Endothelial cell of umbilical vein (primary cell): ENCODE measurements at regions of chr10 and their contacts with region 1.

Region 1: GRCh38 chr10:69957886-69958555 is 94.6 kb upstream of the MACROH2A2 start:
- DNase-seq: peak; percentile 43
- H3K4me3 ChIP-seq: no peak overlapping the region
- H3K27ac ChIP-seq: no peak overlapping the region
- H3K4me1 ChIP-seq: no peaks in the 10 kb centered on the region
- H3K27me3 ChIP-seq: no peaks in the 10 kb centered on the region
- CTCF ChIP-seq: peak; percentile 85 to 90
- POLR2A ChIP-seq: no peak

Region 2: GRCh38 chr10:69644658-69645295 is 313.2 kb before region 1 on chr10:
- CTCF ChIA-PET with region 1: interaction called, 15 read pairs
- POLR2A ChIA-PET with region 1: no interaction called
- dilution Hi-C with region 1: no loop called
- intact Hi-C with region 1: loop called (anchors 1 kb)
- DNase-seq: peak; percentile 49
- H3K4me3 ChIP-seq: no peak overlapping the region
- H3K27ac ChIP-seq: no peak overlapping the region
- H3K4me1 ChIP-seq: no peaks in the 10 kb centered on the region
- H3K27me3 ChIP-seq: peaks cover 2 to 3% of the 10 kb centered on the region in 2 experiments
- CTCF ChIP-seq: peak; percentile 84 to 86
- POLR2A ChIP-seq: no peak

Region 3: DNA sequence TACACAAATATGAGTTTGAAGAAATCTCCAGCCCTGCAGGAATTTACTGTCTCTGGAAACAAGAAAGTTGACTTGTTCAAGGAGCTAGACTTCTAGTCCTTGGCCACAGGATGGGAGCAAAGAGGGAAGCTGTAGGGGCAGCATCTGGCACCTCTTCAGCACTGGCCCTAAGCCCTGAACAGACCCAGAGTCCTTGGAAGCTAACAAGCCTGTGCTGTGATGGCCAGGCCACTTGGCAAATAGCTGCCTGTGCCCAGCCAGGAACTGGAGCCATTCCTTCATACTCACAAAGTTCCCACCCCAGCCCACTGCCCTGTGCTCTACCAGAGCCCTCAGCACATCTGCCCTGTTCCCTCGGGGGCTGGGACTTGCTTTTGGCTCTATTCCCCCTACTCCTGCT is 165.7 kb before region 1 on chr10:
- CTCF ChIA-PET with region 1: interaction called, 172 read pairs
- POLR2A ChIA-PET with region 1: no interaction called
- dilution Hi-C with region 1: no loop called
- intact Hi-C with region 1: loop called (anchors 1 kb)
- DNase-seq: no peak
- H3K4me3 ChIP-seq: no peak overlapping the region
- H3K27ac ChIP-seq: no peak overlapping the region
- H3K4me1 ChIP-seq: no peaks in the 10 kb centered on the region
- H3K27me3 ChIP-seq: peaks cover 11 to 22% of the 10 kb centered on the region in 2 experiments
- CTCF ChIP-seq: no peak
- POLR2A ChIP-seq: no peak

Region 4: GRCh38 chr10:69901628-69902505 is 56.2 kb before region 1 on chr10:
- CTCF ChIA-PET with region 1: interaction called, 19 read pairs
- POLR2A ChIA-PET with region 1: no interaction called
- dilution Hi-C with region 1: no loop called
- intact Hi-C with region 1: no loop called
- DNase-seq: peak; percentile 71
- H3K4me3 ChIP-seq: no peak overlapping the region
- H3K27ac ChIP-seq: peak overlapping the region; percentile 38
- H3K4me1 ChIP-seq: peaks cover 11% of the 10 kb centered on the region
- H3K27me3 ChIP-seq: no peaks in the 10 kb centered on the region
- CTCF ChIP-seq: peak; percentile 71 to 81
- POLR2A ChIP-seq: no peak

Region 5: DNA sequence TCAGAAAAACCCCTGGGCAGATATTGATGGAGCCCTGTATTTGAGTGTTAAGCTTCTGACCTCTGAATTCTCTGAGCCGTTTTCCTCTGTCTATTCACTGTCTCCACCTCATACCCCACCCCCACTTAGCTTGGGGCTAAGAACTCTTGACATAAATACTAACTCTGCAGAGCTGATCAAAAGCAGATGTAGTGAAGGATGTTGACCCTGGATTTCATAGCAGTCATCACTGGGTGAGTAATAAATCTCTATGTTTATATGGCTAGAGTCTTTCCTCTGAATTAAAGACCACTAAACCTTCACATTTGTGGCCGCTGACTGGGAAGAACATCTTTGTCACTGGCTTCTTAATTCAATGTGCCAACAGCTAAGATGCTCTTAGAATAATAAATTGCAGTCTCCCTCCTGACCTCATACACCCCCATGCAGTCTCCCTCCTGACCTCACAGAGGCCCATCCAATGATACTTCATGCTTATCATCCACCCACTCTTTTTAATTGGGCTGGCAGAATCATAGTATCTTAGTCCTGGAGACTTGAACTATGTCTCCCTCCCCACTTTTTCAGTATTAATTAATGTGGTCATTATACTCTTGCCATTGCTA is 16.6 kb after region 1 on chr10:
- CTCF ChIA-PET with region 1: interaction called, 29 read pairs
- POLR2A ChIA-PET with region 1: no interaction called
- dilution Hi-C with region 1: no loop called
- intact Hi-C with region 1: no loop called
- DNase-seq: no peak
- H3K4me3 ChIP-seq: no peak overlapping the region
- H3K27ac ChIP-seq: no peak overlapping the region
- H3K4me1 ChIP-seq: no peaks in the 10 kb centered on the region
- H3K27me3 ChIP-seq: peaks cover 40 to 74% of the 10 kb centered on the region in 2 experiments
- CTCF ChIP-seq: no peak
- POLR2A ChIP-seq: no peak